Heart left ventricle (tissue), 16 donors: ENCODE measurements at regions of chr2 and their contacts with region 1.

Region 1: DNA sequence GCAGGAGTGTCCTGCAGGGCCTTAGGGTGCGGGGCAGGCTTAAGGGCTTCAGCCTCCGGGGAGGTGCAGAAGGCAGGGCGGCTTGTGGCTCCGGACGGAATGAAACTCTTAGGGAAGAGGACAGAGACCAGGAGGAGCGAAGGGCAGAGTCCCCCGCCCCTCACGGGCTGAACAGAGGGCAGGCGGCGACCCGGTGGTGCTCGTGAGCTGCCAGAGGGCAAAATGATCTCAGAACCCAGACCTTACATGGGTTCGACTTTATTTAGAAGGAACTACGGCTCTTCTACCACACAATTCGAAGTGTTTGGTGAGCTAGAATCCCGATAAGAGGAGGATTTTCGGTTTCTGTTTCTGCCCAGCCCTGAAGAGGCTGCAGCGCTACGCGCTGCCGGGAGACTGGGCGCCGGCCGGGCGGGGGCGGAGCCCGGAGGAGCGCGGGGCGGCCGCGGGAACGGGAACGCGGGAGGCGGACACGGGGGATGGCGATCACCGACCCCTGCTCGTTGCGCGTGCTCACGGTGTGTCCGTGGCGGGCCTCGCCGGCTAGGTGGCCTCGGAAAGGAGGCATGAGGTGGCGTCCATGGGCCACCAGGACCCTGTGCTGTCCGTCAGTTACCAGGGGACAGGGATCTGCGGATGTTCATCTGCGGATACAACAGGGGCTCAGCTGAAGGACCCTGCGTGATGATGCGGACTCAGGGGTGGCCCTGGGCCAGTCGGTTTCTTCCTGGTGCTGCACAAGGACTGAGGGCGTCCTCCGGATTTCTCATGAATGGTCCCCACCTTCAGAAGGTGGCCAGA is 4.2 kb upstream of the SP100 start:
- DNase-seq: peak; percentile 70 to 83 (median 73)
- ATAC-seq: peak; percentile 40 to 84 (median 78)
- H3K4me3 ChIP-seq: peak overlapping the region; percentile 39 to 85 (median 70)
- H3K27ac ChIP-seq: peak overlapping the region; percentile 81 to 99 (median 94)
- H3K4me1 ChIP-seq: peaks cover 0 to 75% (median 35%) of the 10 kb centered on the region in 12 donors
- H3K27me3 ChIP-seq: no peaks in the 10 kb centered on the region
- CTCF ChIP-seq: no peak
- POLR2A ChIP-seq: no peak

Region 2: GRCh38 chr2:230326453-230327417 is 85.0 kb before region 1 on chr2 and contains the start of gene SP140L:
- intact Hi-C with region 1: loop called in 2 of 10 experiments (anchors 10 kb)
- DNase-seq: peak; percentile 71 to 87 (median 79)
- ATAC-seq: peak; percentile 82 to 96 (median 94)
- H3K4me3 ChIP-seq: peak within 1 kb of the TSS; percentile 9 to 70 (median 50)
- H3K27ac ChIP-seq: peak within 1 kb of the TSS in 11 of 12 donors; percentile 59 to 96 (median 81)
- H3K4me1 ChIP-seq: peaks cover 0 to 61% (median 11%) of the 10 kb centered on the region in 12 donors
- H3K27me3 ChIP-seq: no peaks in the 10 kb centered on the region
- CTCF ChIP-seq: no peak
- POLR2A ChIP-seq: no peak
- total RNA-seq, gene SP140L: 2.5 to 17.6 (median 4.0) TPM